Dorsolateral prefrontal cortex (tissue), 120 donors: ENCODE measurements at regions of chr6 and their contacts with region 1.

Region 1: GRCh38 chr6:54697424-54697823 is 149.1 kb upstream of the FAM83B start:
- DNase-seq: no peak
- H3K4me3 ChIP-seq: no peak overlapping the region
- H3K27ac ChIP-seq: no peak overlapping the region
- H3K27me3 ChIP-seq: no peaks in the 10 kb centered on the region
- CTCF ChIP-seq: peak in 43 of 56 donors; percentile 8 to 60 (median 35)

Region 2: GRCh38 chr6:55069132-55069781 is 371.8 kb after region 1 on chr6:
- intact Hi-C with region 1: loop called in 1 of 2 experiments (anchors 5 kb)
- DNase-seq: peak in 1 of 10 donors; percentile 27
- H3K4me3 ChIP-seq: no peak overlapping the region
- H3K27ac ChIP-seq: no peak overlapping the region
- H3K27me3 ChIP-seq: peaks cover 0 to 4% (median 0%) of the 10 kb centered on the region in 45 donors
- CTCF ChIP-seq: peak; percentile 21 to 76 (median 55)

Region 3: GRCh38 chr6:55239099-55239498 is 541.7 kb after region 1 on chr6:
- intact Hi-C with region 1: loop called in 1 of 2 experiments (anchors 10 kb)
- DNase-seq: no peak
- H3K4me3 ChIP-seq: no peak overlapping the region
- H3K27ac ChIP-seq: no peak overlapping the region
- H3K27me3 ChIP-seq: no peaks in the 10 kb centered on the region
- CTCF ChIP-seq: no peak